ENCODE measurements at regions of chr10 and their contacts with region 1.

Region 1: GRCh38 chr10:87696922-87697714 is 37.4 kb downstream of the PAPSS2 start:
- DNase-seq: no peak
- H3K4me3 ChIP-seq: no peak overlapping the region
- H3K27ac ChIP-seq: no peak overlapping the region
- H3K4me1 ChIP-seq: peaks cover 6% of the 10 kb centered on the region
- H3K27me3 ChIP-seq: no peaks in the 10 kb centered on the region
- CTCF ChIP-seq: no peak
- POLR2A ChIP-seq: no peak

Region 2: DNA sequence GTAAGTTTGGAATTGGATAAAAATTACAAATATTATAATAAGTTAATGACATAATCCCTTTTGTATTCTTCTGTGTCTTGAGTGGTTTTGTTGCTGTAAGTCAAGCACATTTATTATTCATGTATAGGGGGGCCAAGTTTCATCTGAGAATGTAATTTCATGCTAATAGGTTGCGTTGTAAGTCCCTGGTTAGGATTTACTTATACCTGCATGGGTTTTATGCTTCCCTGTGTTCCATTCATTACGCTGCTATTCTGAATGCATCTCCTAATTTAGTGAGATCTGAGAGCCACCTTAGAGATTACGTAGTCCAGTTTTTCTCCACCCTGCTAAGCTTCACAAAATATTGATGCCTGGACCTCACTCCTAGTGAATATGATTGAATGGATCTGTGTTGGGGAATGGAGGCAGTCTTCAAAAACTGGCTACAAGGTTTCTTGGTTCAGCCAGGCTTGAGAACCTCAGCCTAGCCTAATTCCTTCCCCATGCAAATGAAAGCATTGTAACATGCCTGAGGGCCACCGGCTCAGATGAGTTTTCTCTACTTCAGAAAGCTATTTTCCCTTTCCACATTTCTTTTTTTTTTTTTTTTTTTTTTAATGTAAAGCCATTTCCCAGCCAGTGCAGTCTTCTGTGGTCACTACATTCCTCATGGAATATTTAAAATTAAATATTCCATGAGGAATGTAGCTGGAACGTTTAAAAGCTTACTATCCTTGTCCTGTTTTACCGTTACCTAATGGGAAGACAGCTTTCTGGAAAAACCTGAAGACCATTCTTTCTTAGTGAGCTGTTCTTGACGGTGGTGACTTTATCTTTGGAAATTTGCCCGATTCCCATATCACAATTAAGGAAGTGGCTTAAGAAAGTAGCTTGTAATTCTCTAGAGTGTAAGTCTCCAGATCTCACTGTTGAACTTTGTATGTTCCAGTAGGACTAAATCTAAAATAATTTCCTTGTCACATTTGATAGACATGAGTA is 21.4 kb before region 1 on chr10:
- intact Hi-C with region 1: loop called (anchors 2 kb)
- DNase-seq: no peak
- H3K4me3 ChIP-seq: no peak overlapping the region
- H3K27ac ChIP-seq: no peak overlapping the region
- H3K4me1 ChIP-seq: no peaks in the 10 kb centered on the region
- H3K27me3 ChIP-seq: no peaks in the 10 kb centered on the region
- CTCF ChIP-seq: no peak
- POLR2A ChIP-seq: no peak

Measured in vagina (tissue), 2 donors.